PC-3 (cell line): ENCODE measurements at regions of chr5 and their contacts with region 1.

Region 1: GRCh38 chr5:127959152-127959764 is 124.3 kb upstream of the SLC12A2 start:
- DNase-seq: peak; percentile 94
- ATAC-seq: peak; percentile 36
- H3K4me3 ChIP-seq: no peak overlapping the region; the same call in 1 of the 2 replicates
- H3K27ac ChIP-seq: peak overlapping the region; percentile 90
- H3K4me1 ChIP-seq: peaks cover 39% of the 10 kb centered on the region
- H3K27me3 ChIP-seq: no peaks in the 10 kb centered on the region
- CTCF ChIP-seq: no peak

Region 2: DNA sequence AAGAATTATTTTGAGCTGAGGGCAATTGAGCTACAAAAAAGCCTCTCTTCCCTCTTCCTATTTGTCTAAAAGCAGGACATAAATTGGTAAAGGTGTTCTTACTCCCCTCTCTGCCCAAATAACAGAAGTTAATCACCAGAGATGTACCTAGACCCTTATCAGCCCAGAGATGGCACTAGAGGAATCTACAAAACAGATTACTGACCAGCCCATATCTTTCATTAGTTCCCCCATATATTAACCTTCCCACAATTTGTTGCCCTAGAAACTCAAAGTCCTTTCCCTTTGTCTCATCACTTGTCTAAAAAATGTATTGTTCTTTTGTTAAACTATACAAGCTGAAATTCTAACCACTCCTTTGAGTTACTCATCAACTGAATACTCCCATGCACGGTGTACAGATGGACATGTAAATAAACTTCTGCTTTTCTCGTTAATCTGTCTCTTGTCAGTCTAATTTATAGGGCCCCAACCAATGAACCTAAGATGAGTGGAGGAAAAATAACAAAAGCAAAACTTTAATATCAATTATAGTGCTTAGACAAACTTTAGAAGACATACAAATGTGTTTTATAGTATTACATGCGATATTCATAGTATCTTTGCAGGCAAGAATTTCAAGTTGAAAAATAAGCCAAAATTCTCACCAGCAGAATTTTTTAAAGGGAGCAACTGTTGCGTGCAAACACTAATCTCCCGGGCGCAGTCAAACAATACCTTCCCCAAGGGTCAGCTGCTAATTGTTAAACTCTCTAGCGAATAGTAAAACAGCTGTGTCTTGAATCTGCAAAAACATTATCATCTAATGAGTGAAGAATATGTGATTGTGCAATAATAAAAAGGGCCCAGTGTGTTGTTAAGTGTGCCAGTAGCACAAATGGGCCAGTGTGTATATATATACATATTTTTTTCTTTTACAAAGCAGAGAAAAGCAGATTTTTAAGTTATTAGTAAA is 125.0 kb before region 1 on chr5:
- CTCF ChIA-PET with region 1: no interaction called
- POLR2A ChIA-PET with region 1: no interaction called
- intact Hi-C with region 1: loop called (anchors 1 kb)
- DNase-seq: peak; percentile 68
- ATAC-seq: peak; percentile 93
- H3K4me3 ChIP-seq: no peak overlapping the region
- H3K27ac ChIP-seq: peak overlapping the region; percentile 32
- H3K4me1 ChIP-seq: peaks cover 25% of the 10 kb centered on the region
- H3K27me3 ChIP-seq: no peaks in the 10 kb centered on the region
- CTCF ChIP-seq: no peak; the same call in 1 of the 2 replicates

Region 3: DNA sequence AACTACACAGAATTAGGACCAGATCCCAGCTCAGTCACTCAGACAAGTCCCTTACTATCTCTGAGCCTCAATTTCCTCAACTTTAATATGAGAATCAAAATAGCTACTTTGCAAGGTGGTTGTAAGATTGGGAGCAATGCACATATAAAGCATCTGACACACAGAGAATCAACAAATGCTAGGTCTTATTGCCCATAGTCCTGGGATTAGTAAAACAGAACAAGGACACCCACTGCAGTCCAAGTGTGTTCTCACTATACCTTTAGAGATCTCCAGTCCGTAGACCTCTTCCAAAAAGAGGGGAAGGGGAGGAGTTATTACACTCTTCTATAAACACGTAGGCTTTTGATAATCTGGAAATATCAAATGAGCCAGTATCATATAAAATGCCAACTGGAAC is 66.0 kb before region 1 on chr5:
- CTCF ChIA-PET with region 1: no interaction called
- POLR2A ChIA-PET with region 1: interaction called, 15 read pairs
- intact Hi-C with region 1: no loop called
- DNase-seq: no peak
- ATAC-seq: peak; percentile 36
- H3K4me3 ChIP-seq: peak overlapping the region; percentile 16; the same call in 1 of the 2 replicates
- H3K27ac ChIP-seq: peak overlapping the region; percentile 78
- H3K4me1 ChIP-seq: peaks cover 24% of the 10 kb centered on the region
- H3K27me3 ChIP-seq: no peaks in the 10 kb centered on the region
- CTCF ChIP-seq: no peak

Region 4: DNA sequence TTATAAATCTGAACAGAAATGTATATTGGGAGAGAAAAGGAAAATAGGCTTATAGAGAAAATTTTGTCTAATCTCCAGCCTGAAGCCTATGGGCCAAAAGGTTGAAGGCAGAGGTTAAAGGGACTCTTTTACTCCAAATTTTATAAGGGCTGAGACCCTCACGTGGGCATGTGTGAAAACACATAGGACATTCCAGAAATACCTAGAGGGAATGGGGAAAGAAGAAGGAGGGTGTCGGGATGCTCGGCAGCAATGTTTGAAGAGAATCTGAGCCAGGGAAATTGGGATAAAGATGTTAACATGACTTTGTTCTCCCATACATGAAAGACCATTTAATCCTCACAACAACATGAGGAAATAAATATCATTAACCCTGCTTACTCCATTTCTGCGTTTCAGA is 22.2 kb after region 1 on chr5:
- CTCF ChIA-PET with region 1: interaction called, 4 read pairs
- POLR2A ChIA-PET with region 1: no interaction called
- intact Hi-C with region 1: loop called (anchors 2 kb)
- DNase-seq: no peak
- ATAC-seq: no peak
- H3K4me3 ChIP-seq: no peak overlapping the region
- H3K27ac ChIP-seq: no peak overlapping the region
- H3K4me1 ChIP-seq: peaks cover 21% of the 10 kb centered on the region
- H3K27me3 ChIP-seq: no peaks in the 10 kb centered on the region
- CTCF ChIP-seq: no peak

Region 5: DNA sequence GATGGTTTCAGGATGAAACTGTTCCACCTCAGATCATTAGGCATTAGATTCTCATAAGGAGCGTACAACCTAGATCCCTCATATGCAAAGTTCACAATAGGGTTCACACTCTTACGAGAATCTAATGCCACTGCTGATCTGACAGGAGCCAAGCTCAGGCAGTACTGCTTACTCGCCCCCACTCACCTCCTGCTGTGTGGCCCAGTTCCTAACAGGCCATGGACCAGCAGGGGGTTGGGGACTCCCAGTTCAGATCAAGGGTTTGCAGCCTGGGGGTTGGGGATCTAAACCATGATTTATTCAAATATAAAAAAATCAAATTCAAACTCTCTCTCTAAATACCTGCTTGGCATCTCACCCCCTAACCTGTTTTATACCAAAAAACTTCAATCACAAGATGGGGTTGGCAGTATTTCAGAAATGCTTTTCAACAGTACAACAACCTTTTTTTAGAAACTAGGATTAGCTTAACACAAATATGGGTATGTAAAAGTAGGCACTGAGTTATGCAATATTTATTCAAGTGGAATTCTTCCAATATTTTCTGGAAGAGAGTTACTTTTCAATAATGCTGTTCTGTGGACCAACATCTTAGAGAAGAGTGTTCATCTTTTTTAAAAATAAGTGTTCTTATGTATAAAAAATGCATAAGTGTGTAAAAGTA is 94.2 kb after region 1 on chr5:
- CTCF ChIA-PET with region 1: no interaction called
- POLR2A ChIA-PET with region 1: no interaction called
- intact Hi-C with region 1: loop called (anchors 5 kb)
- DNase-seq: peak; percentile 51
- ATAC-seq: peak; percentile 66
- H3K4me3 ChIP-seq: no peak overlapping the region
- H3K27ac ChIP-seq: peak overlapping the region; percentile 23
- H3K4me1 ChIP-seq: peaks cover 24% of the 10 kb centered on the region
- H3K27me3 ChIP-seq: no peaks in the 10 kb centered on the region
- CTCF ChIP-seq: no peak

Region 6: GRCh38 chr5:128144491-128144890 is 185.2 kb after region 1 on chr5:
- CTCF ChIA-PET with region 1: no interaction called
- POLR2A ChIA-PET with region 1: no interaction called
- intact Hi-C with region 1: no loop called
- DNase-seq: no peak
- ATAC-seq: 0 out of 2 replicates have a peak, but pooled peaks have one; percentile 24
- H3K4me3 ChIP-seq: no peak overlapping the region
- H3K27ac ChIP-seq: no peak overlapping the region
- H3K4me1 ChIP-seq: no peaks in the 10 kb centered on the region
- H3K27me3 ChIP-seq: no peaks in the 10 kb centered on the region
- CTCF ChIP-seq: no peak

Region 7: DNA sequence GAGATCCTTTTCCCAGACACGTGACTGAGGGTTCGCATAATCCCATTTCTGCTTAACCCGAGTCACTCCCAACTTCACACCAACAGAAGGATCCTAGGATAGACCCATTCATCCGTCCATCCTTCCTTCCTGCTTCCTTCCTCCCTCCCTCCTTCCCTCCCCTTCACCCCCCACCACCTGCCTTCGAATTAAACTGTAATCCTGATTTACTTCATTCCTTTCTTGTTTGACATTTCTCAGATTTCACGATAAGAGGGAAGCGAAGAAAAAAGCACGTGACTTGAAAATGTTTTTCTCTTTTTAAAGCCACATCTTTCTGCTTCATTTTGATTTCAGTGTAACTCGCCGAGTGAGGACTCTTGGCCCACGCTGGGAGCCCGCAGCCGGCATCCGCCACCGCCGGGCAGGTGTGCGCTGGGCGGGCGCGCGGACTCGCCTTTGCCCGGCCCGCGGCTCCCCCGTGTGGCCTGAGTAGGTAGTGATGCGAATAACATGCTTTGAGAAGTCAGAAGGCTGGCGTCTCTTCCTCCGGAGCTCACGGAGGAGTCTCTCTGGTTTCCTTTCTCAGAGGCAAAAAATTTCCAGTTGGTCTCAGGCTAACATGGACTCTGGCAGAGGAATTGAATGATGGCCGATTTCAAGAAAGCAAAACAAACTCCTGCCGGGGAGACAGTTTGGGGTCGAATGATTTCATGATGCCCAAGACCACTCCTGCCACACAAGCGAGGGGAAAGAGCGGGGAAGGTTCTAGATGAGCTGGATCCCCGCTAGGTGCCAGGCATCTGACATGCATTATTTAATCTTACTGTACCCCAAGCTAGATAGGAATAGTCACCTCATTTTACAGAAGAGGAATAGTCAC is 242.0 kb after region 1 on chr5:
- CTCF ChIA-PET with region 1: interaction called, 5 read pairs
- POLR2A ChIA-PET with region 1: no interaction called
- intact Hi-C with region 1: loop called (anchors 1 kb)
- DNase-seq: peak; percentile 87
- ATAC-seq: peak; percentile 66
- H3K4me3 ChIP-seq: peak overlapping the region; percentile 57
- H3K27ac ChIP-seq: peak overlapping the region; percentile 4; the same call in 1 of the 2 replicates
- H3K4me1 ChIP-seq: peaks cover 33% of the 10 kb centered on the region
- H3K27me3 ChIP-seq: no peaks in the 10 kb centered on the region
- CTCF ChIP-seq: peak; percentile 96